ENCODE measurements at regions of chr5 and their contacts with region 1.

Region 1: DNA sequence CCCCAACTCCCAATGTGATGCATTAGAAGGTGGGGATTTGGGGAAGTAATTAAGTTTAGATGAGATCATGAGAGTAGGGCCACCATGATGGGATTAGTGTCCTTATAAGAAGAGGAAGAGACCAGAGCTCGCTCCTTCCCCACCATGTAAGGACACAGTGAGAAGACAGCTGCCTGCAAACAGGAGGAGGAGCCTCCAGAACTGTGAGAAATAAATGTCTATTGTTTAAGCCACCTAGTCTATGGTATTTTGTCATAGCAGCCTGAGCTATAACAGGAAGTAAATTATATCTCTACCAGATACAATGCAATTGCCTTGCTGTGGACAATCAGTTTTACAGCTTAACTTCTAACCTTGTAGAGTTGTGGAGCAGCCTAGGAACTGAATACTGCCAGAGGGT is 58.0 kb downstream of the ANKRD33B start:
- DNase-seq: no peak
- ATAC-seq: no peak
- H3K4me3 ChIP-seq: no peak overlapping the region
- H3K27ac ChIP-seq: no peak overlapping the region
- H3K4me1 ChIP-seq: peaks cover 1 to 34% (median 16%) of the 10 kb centered on the region in 9 donors
- H3K27me3 ChIP-seq: no peaks in the 10 kb centered on the region
- CTCF ChIP-seq: no peak

Region 2: GRCh38 chr5:9787861-9788600 is 833.8 kb before region 1 on chr5:
- intact Hi-C with region 1: no loop called
- DNase-seq: peak; percentile 14 to 20
- ATAC-seq: peak; percentile 51 to 87 (median 66)
- H3K4me3 ChIP-seq: no peak overlapping the region
- H3K27ac ChIP-seq: no peak overlapping the region
- H3K4me1 ChIP-seq: peaks cover 0 to 14% (median 0%) of the 10 kb centered on the region in 9 donors
- H3K27me3 ChIP-seq: no peaks in the 10 kb centered on the region
- CTCF ChIP-seq: no peak

Region 3: DNA sequence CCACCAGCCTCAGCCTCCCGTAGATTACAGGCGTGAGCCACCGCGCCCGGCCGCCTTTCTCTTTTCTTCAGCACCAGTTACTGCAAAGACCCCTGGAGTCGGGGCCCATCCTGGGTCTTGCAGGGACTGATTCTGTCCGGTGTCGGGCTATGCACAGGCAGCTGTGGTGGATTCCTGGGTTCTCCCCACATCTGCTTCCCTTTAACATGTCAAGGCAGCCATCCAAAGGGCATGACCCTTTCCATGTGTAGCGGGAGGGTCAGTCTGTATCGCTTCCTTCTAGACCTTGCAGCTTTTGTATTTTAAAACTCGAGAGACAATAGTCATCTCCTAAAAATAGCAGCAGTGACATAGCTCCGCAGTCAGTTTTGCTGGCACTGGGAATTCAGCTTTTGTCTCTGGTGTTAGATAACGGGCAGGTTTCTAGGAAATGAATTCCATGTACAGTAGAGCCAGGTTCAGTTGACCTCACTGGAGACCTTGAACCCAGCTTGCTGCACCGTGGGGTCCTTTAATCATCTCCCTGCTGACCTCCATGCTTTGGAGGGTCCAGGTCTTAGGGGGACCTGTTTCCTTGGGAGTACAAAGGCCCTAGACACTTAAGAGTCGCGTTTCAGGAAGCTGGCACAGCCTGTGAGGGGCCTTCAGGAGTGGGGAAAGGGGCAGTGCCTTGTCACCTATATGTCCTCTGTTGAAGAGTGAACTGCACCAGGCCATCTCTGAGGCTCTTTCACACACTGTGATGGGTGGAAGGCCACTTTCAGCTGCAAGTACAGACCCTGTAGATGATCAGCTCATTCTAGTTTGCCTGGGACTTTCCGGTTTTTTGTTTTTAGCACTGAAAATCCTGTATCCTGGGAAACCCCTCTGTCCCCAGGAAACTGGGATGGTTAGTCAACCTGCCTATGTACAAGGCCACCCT is 44.2 kb before region 1 on chr5:
- intact Hi-C with region 1: loop called in 1 of 10 experiments (anchors 5 kb)
- DNase-seq: peak; percentile 30 to 86
- ATAC-seq: peak; percentile 89 to 96 (median 94)
- H3K4me3 ChIP-seq: no peak overlapping the region
- H3K27ac ChIP-seq: peak overlapping the region in 9 of 10 donors; percentile 50 to 89 (median 75)
- H3K4me1 ChIP-seq: peaks cover 5 to 64% (median 40%) of the 10 kb centered on the region in 9 donors
- H3K27me3 ChIP-seq: no peaks in the 10 kb centered on the region
- CTCF ChIP-seq: no peak

Region 4: GRCh38 chr5:10595678-10596309 is 26.0 kb before region 1 on chr5:
- intact Hi-C with region 1: no loop called
- DNase-seq: peak in 1 of 2 donors; percentile 71
- ATAC-seq: peak; percentile 72 to 94 (median 86)
- H3K4me3 ChIP-seq: peak overlapping the region in 8 of 10 donors; percentile 8 to 34 (median 26)
- H3K27ac ChIP-seq: peak overlapping the region in 9 of 10 donors; percentile 30 to 83 (median 76)
- H3K4me1 ChIP-seq: peaks cover 8 to 65% (median 39%) of the 10 kb centered on the region in 9 donors
- H3K27me3 ChIP-seq: no peaks in the 10 kb centered on the region
- CTCF ChIP-seq: no peak

Measured in heart right ventricle (tissue), 16 donors.